ENCODE measurements at regions of chr11 and their contacts with region 1.

Region 1: GRCh38 chr11:44911029-44911814 is 39.5 kb downstream of the TP53I11 start:
- DNase-seq: peak; percentile 57 to 84 (median 78)
- ATAC-seq: peak; percentile 78
- H3K4me3 ChIP-seq: no peak overlapping the region
- H3K4me3 Mint-ChIP-seq: no peak overlapping the region
- H3K27ac ChIP-seq: no peak overlapping the region
- H3K27ac Mint-ChIP-seq: peak overlapping the region in 4 of 9 donors; percentile 14 to 55 (median 30)
- H3K4me1 ChIP-seq: no peaks in the 10 kb centered on the region
- H3K4me1 Mint-ChIP-seq: peaks cover 4 to 9% (median 7%) of the 10 kb centered on the region in 7 donors
- H3K27me3 ChIP-seq: no peaks in the 10 kb centered on the region
- H3K27me3 Mint-ChIP-seq: no peaks in the 10 kb centered on the region

Region 2: DNA sequence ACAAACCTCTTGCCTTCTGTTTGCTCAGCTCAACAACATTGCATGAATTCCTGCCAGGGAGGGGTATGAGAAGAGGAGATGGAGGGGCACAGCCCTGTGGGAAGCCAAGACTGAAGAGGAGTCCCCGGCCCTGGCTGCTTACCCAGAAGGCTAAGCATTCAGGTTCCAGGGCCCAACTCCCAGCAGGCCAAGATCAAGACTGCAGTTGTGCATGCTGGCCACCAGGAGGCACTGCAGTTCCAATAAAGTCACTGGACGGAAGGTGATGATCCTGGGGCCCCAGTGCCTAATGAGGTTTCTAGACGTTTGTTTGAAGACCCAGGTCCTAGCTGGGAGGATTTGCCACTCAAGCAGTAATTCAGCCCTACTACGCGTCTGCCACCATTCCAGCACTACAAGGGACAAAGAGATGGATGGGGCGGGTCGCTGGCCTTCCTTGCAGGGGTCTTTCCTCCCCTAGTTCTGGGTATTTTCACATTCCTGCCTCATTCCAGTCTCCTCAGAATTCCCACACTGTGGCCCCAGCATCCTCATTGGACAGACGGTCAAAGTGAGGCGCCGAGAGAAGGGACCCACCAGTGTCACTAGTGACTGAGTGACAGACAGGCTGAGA is 624.8 kb before region 1 on chr11:
- CTCF ChIA-PET with region 1: no interaction called
- POLR2A ChIA-PET with region 1: no interaction called
- intact Hi-C with region 1: loop called (anchors 1 to 5 kb)
- DNase-seq: peak in 8 of 9 donors; percentile 17 to 56 (median 40)
- ATAC-seq: peak; percentile 67
- H3K4me3 ChIP-seq: no peak overlapping the region
- H3K4me3 Mint-ChIP-seq: no peak overlapping the region
- H3K27ac ChIP-seq: no peak overlapping the region
- H3K27ac Mint-ChIP-seq: peak overlapping the region in 1 of 9 donors; percentile 48
- H3K4me1 ChIP-seq: no peaks in the 10 kb centered on the region
- H3K4me1 Mint-ChIP-seq: peaks cover 0 to 4% (median 0%) of the 10 kb centered on the region in 7 donors
- H3K27me3 ChIP-seq: no peaks in the 10 kb centered on the region
- H3K27me3 Mint-ChIP-seq: peaks cover 0 to 14% (median 3%) of the 10 kb centered on the region in 5 donors

Region 3: GRCh38 chr11:44556735-44557409 is 354.4 kb before region 1 on chr11:
- CTCF ChIA-PET with region 1: interaction called, 19 read pairs
- POLR2A ChIA-PET with region 1: no interaction called
- intact Hi-C with region 1: loop called (anchors 1 kb)
- DNase-seq: peak in 8 of 9 donors; percentile 30 to 69 (median 60)
- ATAC-seq: peak; percentile 84
- H3K4me3 ChIP-seq: no peak overlapping the region
- H3K4me3 Mint-ChIP-seq: peak overlapping the region in 2 of 10 donors; percentile 20 to 25
- H3K27ac ChIP-seq: no peak overlapping the region
- H3K27ac Mint-ChIP-seq: peak overlapping the region in 4 of 9 donors; percentile 8 to 65 (median 57)
- H3K4me1 ChIP-seq: peaks cover 9 to 13% of the 10 kb centered on the region in 2 donors
- H3K4me1 Mint-ChIP-seq: peaks cover 11 to 39% (median 29%) of the 10 kb centered on the region in 7 donors
- H3K27me3 ChIP-seq: no peaks in the 10 kb centered on the region
- H3K27me3 Mint-ChIP-seq: peaks cover 0 to 3% (median 0%) of the 10 kb centered on the region in 5 donors

Region 4: GRCh38 chr11:44658506-44658850 is 252.7 kb before region 1 on chr11:
- CTCF ChIA-PET with region 1: interaction called, 5 read pairs
- POLR2A ChIA-PET with region 1: no interaction called
- intact Hi-C with region 1: loop called (anchors 1 kb)
- DNase-seq: peak in 5 of 9 donors; percentile 14 to 37 (median 30)
- ATAC-seq: peak; percentile 29
- H3K4me3 ChIP-seq: no peak overlapping the region
- H3K4me3 Mint-ChIP-seq: peak overlapping the region in 1 of 10 donors; percentile 16
- H3K27ac ChIP-seq: no peak overlapping the region
- H3K27ac Mint-ChIP-seq: peak overlapping the region in 2 of 9 donors; percentile 54 to 58
- H3K4me1 ChIP-seq: peaks cover 0 to 15% of the 10 kb centered on the region in 2 donors
- H3K4me1 Mint-ChIP-seq: peaks cover 16 to 32% (median 26%) of the 10 kb centered on the region in 7 donors
- H3K27me3 ChIP-seq: no peaks in the 10 kb centered on the region
- H3K27me3 Mint-ChIP-seq: peaks cover 0 to 24% (median 0%) of the 10 kb centered on the region in 5 donors

Region 5: DNA sequence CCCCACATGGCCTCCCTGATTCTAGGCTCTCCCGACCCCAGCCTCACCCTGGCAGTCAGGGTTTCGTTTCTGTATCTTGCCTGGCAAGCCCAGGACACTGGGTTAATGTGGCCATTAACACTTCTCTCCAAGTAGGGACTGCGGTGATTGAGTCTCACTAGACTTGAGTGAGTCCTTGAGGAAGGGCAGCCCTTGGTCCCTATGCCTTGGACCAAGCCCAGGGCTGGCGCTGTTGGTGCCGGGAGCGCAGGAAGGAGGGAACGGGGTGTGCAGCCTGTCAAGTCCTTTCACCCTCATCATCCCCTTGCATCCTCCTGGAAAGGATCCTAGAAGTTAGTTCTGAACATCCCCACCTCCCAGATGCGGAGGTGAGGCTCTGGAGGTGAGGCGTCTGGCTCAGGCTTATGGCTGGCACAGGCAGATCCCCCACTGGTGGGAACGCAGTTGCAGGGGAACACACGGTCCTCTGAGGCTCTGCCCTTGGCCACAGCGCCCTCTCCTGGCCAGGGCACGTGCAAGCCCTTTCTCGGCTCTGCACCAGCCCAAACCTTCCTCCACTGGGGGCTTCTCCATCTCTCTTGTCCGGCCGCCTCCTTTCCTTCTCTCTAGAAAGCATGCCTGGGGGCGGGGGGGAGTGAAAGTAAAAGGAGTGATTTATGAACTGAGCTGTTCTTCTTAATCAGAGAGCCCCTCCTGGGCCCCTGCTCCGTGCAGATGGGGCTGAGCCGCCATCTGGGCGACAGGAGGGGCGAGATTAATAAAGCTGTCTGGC is 17.2 kb before region 1 on chr11:
- CTCF ChIA-PET with region 1: interaction called, 5 read pairs
- POLR2A ChIA-PET with region 1: no interaction called
- intact Hi-C with region 1: loop called in 1 of 2 experiments (anchors 1 kb)
- DNase-seq: peak; percentile 16 to 65 (median 45)
- ATAC-seq: peak; percentile 84
- H3K4me3 ChIP-seq: no peak overlapping the region
- H3K4me3 Mint-ChIP-seq: no peak overlapping the region
- H3K27ac ChIP-seq: no peak overlapping the region
- H3K27ac Mint-ChIP-seq: peak overlapping the region in 1 of 9 donors; percentile 45
- H3K4me1 ChIP-seq: no peaks in the 10 kb centered on the region
- H3K4me1 Mint-ChIP-seq: peaks cover 0 to 12% (median 4%) of the 10 kb centered on the region in 7 donors
- H3K27me3 ChIP-seq: no peaks in the 10 kb centered on the region
- H3K27me3 Mint-ChIP-seq: no peaks in the 10 kb centered on the region

Region 6: GRCh38 chr11:45655347-45655756 is 744.1 kb after region 1 on chr11:
- CTCF ChIA-PET with region 1: no interaction called
- POLR2A ChIA-PET with region 1: no interaction called
- intact Hi-C with region 1: no loop called
- DNase-seq: peak in 7 of 9 donors; percentile 21 to 66 (median 37)
- ATAC-seq: peak; percentile 73
- H3K4me3 ChIP-seq: no peak overlapping the region
- H3K4me3 Mint-ChIP-seq: peak overlapping the region in 1 of 10 donors; percentile 74
- H3K27ac ChIP-seq: no peak overlapping the region
- H3K27ac Mint-ChIP-seq: peak overlapping the region in 1 of 9 donors; percentile 57
- H3K4me1 ChIP-seq: peaks cover 0 to 6% of the 10 kb centered on the region in 2 donors
- H3K4me1 Mint-ChIP-seq: peaks cover 0 to 13% (median 7%) of the 10 kb centered on the region in 7 donors
- H3K27me3 ChIP-seq: peaks cover 0 to under 1% of the 10 kb centered on the region in 2 donors
- H3K27me3 Mint-ChIP-seq: peaks cover 12 to 49% (median 24%) of the 10 kb centered on the region in 5 donors

Measured in naive thymus-derived CD4-positive, alpha-beta T cell (primary cell).